Colonic mucosa (tissue), 4 donors: ENCODE measurements at regions of chr3 and their contacts with region 1.

Region 1: GRCh38 chr3:84547971-84548970 is 410.5 kb upstream of the CADM2 start:
- DNase-seq: no peak
- H3K4me3 ChIP-seq: no peak overlapping the region
- H3K27ac ChIP-seq: no peak overlapping the region
- H3K4me1 ChIP-seq: no peaks in the 10 kb centered on the region
- H3K27me3 ChIP-seq: no peaks in the 10 kb centered on the region
- CTCF ChIP-seq: peak; percentile 40

Region 2: DNA sequence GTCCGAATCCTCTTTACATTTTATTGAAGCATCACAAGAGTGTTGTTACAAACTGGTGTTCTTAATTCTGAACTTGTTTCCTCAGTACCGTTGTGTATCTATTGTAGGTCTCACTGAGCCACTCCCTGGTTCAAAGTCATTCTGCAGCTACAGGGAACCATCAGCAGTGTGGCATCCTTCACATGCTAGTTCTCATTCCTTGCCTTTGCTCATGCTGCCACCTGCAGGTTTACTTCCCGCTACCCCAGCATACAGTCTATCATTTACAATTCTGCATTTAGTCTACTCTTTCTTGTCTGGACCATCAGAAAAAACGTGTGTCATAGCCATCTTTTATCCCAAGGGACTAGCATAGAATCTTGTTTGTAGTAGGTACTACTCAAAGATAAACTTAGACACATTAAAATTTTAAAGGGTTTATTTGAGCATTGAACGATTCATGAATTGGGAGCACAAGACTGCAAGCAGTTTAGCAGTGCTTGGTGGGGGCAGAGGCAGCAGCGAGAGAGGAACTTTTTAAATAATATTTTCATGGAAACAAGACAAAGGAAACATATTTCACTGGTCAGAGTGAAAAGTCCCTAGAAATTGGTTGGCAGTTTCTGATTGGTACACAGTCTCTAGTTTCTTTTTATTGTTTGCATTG is 812.6 kb after region 1 on chr3:
- intact Hi-C with region 1: loop called (anchors 5 kb)
- DNase-seq: peak; percentile 35
- H3K4me3 ChIP-seq: no peak overlapping the region
- H3K27ac ChIP-seq: no peak overlapping the region
- H3K4me1 ChIP-seq: no peaks in the 10 kb centered on the region
- H3K27me3 ChIP-seq: no peaks in the 10 kb centered on the region
- CTCF ChIP-seq: peak; percentile 31

Region 3: GRCh38 chr3:85576091-85576690 is 1027.9 kb after region 1 on chr3:
- intact Hi-C with region 1: loop called (anchors 5 kb)
- DNase-seq: peak; percentile 45
- H3K4me3 ChIP-seq: no peak overlapping the region
- H3K27ac ChIP-seq: no peak overlapping the region
- H3K4me1 ChIP-seq: no peaks in the 10 kb centered on the region
- H3K27me3 ChIP-seq: no peaks in the 10 kb centered on the region
- CTCF ChIP-seq: peak; percentile 89